ENCODE measurements at regions of chr12 and their contacts with region 1.

Region 1: DNA sequence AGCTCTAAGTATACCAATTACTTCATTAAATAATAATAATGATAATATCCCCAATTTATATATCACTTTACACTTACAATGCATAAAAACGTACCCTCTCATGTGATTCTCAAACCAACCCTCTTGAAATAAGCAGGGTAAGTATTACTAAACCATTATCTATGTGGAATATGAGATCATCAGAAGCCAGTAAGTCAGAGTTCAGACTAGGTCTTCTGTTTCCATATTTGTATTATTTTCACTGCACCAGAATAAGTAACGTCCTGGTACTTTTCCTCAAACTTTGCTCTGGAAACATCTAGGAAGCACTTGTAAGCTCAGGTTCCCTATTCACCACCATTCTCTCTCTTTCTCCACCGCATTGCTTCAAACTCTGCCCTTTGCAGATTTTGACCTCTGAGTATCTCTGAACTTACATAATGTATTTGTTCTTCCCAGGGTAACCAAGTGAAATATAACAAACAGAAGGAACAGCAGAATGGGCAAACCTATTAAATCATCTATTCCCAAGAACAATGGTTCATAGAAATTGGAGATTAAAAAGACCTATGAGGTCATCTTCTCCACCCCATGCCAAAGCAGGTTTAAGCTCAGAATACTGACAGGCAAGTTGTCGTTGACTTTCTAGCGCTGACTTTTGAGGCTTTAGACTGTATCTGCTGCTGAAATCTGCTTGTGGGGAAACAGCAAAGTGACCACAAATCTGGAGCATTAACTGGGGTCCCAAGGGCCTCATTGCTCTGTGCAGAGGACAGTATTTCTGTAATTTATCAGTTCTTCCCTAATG is 161.3 kb upstream of the FAR2 start:
- DNase-seq: no peak
- ATAC-seq: no peak

Region 2: DNA sequence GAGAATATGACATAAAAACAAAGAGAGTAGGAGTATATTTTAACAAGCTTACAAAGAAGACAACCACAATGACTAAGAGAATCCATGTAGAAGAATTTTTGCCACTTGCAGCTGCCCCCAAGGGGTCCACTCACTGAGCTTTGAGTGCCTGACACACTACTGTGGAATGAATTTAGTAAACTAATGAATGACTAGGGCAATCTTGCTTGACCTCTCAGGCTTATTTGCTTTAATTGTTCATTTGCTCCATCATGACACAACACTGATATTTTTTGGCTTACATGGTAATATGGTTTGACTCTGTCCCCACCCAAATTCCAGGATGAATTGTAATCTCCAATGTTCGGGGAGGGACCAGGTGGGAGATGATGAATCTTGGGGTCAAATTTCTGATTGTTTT is 87.8 kb before region 1 on chr12:
- intact Hi-C with region 1: loop called (anchors 10 kb)
- DNase-seq: no peak
- ATAC-seq: no peak

Region 3: DNA sequence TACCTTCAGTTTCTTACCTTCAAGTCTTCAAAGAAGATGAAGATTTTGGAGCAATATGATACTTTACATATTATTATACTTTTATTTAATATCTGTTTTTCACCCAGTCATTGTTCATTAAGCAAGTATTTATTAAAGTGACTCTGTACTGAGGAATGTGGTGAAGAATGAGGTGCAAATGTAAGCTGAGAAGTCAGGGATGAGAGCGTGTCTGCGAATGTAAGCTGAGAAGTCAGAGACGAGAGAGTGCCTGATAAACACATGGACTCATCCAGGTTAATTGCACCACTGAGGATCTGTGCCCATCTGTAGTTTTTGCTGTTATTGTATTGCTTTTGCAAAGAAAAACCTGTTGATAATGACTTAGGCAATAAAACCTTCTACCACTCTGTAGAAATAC is 50.5 kb before region 1 on chr12:
- intact Hi-C with region 1: no loop called
- DNase-seq: no peak
- ATAC-seq: no peak

Measured in Right ventricle myocardium inferior (tissue), 1 donor.